Activated CD8-positive, alpha-beta T cell treated with anti-CD3 and anti-CD28 coated beads for 36 hours (primary cell): ENCODE measurements at regions of chr1 and their contacts with region 1.

Region 1: GRCh38 chr1:228405987-228406265 is 709 bp downstream of the TRIM11 start:
- DNase-seq: peak; percentile 26
- ATAC-seq: peak; percentile 1
- H3K4me3 Mint-ChIP-seq: peak overlapping the region; percentile 98
- H3K27ac Mint-ChIP-seq: peak overlapping the region; percentile 91
- H3K4me1 Mint-ChIP-seq: peaks cover 47% of the 10 kb centered on the region
- H3K27me3 Mint-ChIP-seq: no peaks in the 10 kb centered on the region
- CTCF ChIP-seq: no peak

Region 2: GRCh38 chr1:228393811-228394570 is 11.9 kb before region 1 on chr1:
- CTCF ChIA-PET with region 1: no interaction called
- POLR2A ChIA-PET with region 1: interaction called, 13 read pairs
- intact Hi-C with region 1: no loop called
- DNase-seq: no peak
- ATAC-seq: no peak
- H3K4me3 Mint-ChIP-seq: no peak overlapping the region
- H3K27ac Mint-ChIP-seq: peak overlapping the region; percentile 38
- H3K4me1 Mint-ChIP-seq: no peaks in the 10 kb centered on the region
- H3K27me3 Mint-ChIP-seq: no peaks in the 10 kb centered on the region
- CTCF ChIP-seq: no peak

Region 3: GRCh38 chr1:228530086-228530758 is 124.3 kb after region 1 on chr1:
- CTCF ChIA-PET with region 1: no interaction called
- POLR2A ChIA-PET with region 1: no interaction called
- intact Hi-C with region 1: no loop called
- DNase-seq: no peak
- ATAC-seq: no peak
- H3K4me3 Mint-ChIP-seq: no peak overlapping the region
- H3K27ac Mint-ChIP-seq: no peak overlapping the region
- H3K4me1 Mint-ChIP-seq: no peaks in the 10 kb centered on the region
- H3K27me3 Mint-ChIP-seq: peaks cover 17% of the 10 kb centered on the region
- CTCF ChIP-seq: no peak